ENCODE measurements at regions of chr5 and their contacts with region 1.

Region 1: DNA sequence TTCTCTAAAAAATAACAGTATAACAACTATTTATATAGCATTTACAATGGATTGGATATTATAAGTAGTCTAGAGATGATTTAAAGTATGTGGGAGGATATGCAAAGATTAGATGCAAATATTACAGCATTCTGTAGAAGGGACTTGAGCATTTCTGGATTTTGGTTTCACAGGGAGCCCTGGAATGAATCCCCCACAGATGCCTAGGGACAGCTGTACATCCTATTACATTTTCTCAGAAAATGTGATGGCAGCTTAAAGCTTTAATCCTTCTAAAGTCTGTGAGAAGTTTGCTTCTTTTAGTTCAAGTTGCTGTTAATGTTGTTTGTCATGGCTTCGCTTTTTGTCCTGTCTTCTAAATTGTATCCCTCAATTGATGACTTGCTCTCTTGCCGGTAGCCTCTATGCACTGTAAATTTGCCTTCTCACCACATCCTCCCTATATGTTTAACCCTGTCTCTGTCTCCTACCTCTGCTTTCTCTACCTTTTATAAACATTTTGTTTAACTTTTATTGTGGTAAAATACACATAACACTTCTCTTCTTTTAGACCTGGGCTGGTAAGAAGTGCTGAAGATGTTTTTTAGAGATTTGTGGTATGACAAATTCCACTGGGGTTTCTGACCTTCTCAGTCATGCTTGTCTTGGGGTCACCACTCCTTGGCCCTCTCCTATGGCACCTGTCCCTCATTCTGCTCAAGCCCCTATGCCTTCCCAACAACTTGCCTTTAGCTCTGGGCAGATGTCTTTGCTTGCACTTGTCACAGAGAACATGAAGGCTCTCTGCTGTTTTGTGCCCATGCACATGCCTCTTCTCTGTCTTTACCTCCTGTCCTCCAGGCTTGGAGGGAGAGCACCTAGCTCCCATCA is 37.9 kb downstream of the LNPEP start:
- DNase-seq: no peak
- ATAC-seq: peak; percentile 29
- H3K4me3 ChIP-seq: no peak overlapping the region
- H3K27ac ChIP-seq: no peak overlapping the region
- H3K4me1 ChIP-seq: peaks cover 15% of the 10 kb centered on the region
- H3K27me3 ChIP-seq: no peaks in the 10 kb centered on the region
- CTCF ChIP-seq: no peak
- EP300 ChIP-seq: no peak
- POLR2A ChIP-seq: no peak
- RAD21 ChIP-seq: no peak

Region 2: DNA sequence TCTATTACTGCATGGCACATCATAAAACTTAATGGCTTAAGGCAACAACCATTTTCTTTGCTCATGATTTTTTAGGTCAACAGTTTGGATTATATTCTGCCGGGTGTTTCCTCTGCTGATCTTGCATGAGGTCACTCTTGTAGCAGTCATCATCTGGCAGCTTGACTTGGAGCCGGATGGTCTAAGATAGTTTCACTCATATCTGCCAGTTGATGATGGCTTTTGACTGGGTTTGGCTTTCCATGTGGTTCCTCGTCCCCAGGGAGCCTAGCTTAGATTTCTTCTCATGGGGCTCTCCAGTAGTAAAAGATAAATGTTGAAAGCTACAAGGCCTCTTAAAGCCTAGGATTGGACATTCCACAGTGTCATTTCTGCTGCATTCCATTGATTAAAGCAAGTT is 10.5 kb before region 1 on chr5:
- CTCF ChIA-PET with region 1: interaction called, 3 read pairs
- POLR2A ChIA-PET with region 1: interaction called, 9 read pairs
- RAD21 ChIA-PET with region 1: interaction called, 8 read pairs
- SMC1A ChIA-PET with region 1: interaction called, 22 read pairs
- in situ Hi-C with region 1: no loop called
- intact Hi-C with region 1: no loop called
- DNase-seq: peak; percentile 33
- ATAC-seq: peak; percentile 74
- H3K4me3 ChIP-seq: peak overlapping the region; percentile 52; the same call in 1 of the 2 replicates
- H3K27ac ChIP-seq: peak overlapping the region; percentile 27
- H3K4me1 ChIP-seq: peaks cover 12% of the 10 kb centered on the region
- H3K27me3 ChIP-seq: no peaks in the 10 kb centered on the region
- CTCF ChIP-seq: no peak
- EP300 ChIP-seq: no peak
- POLR2A ChIP-seq: no peak
- RAD21 ChIP-seq: no peak

Region 3: GRCh38 chr5:97192580-97193358 is 219.0 kb after region 1 on chr5:
- CTCF ChIA-PET with region 1: no interaction called
- POLR2A ChIA-PET with region 1: no interaction called
- RAD21 ChIA-PET with region 1: no interaction called
- SMC1A ChIA-PET with region 1: no interaction called
- in situ Hi-C with region 1: no loop called
- intact Hi-C with region 1: no loop called
- DNase-seq: peak; percentile 63
- ATAC-seq: peak; percentile 94
- H3K4me3 ChIP-seq: 0 out of 2 replicates have a peak overlapping the region, but pooled peaks have one; percentile 32
- H3K27ac ChIP-seq: peak overlapping the region; percentile 73
- H3K4me1 ChIP-seq: peaks cover 8% of the 10 kb centered on the region
- H3K27me3 ChIP-seq: no peaks in the 10 kb centered on the region
- CTCF ChIP-seq: no peak
- EP300 ChIP-seq: peak; percentile 28 to 49; a peak in 1 of 4 replicates
- POLR2A ChIP-seq: no peak
- RAD21 ChIP-seq: no peak

Measured in GM12878 (cell line).